ENCODE measurements at regions of chr20 and their contacts with region 1.

Region 1: DNA sequence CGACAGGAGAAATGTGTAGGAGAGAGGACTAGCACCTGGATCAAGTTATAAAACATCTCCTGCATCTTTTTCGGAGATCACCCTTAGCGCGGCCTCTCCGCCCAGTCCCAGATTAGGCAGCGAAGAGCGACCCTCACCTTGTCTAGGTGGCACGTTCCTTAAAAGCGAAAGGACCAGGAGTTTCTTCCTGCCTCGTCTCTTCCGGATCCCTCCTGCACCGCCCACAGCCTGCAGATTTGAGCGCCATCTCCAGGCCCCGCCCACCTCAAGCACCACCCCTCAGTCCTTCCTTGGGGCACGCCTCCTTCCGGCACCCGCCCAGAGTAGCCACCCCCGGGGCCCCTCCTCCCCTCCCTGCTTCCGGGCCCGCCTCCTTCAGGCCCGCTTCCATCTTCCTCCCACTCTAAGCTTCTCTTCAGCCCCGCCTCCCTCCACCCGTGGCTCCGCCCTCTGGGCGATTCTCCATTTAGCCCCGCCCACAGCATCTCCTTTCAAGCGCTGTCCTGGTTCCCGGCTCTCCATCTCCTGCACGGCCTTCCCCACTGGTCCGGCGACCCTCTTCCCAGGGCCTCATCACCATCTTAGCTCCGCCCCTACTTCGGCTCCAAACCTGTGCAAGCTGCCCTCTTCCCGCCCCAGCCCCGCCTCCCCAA is 662 bp upstream of the RALY start:
- DNase-seq: peak; percentile 93
- ATAC-seq: peak; percentile 85
- H3K4me3 ChIP-seq: peak overlapping the region; percentile 87
- H3K27ac ChIP-seq: peak overlapping the region; percentile 96
- H3K4me1 ChIP-seq: peaks cover 12% of the 10 kb centered on the region
- H3K27me3 ChIP-seq: no peaks in the 10 kb centered on the region
- CTCF ChIP-seq: no peak
- EP300 ChIP-seq: no peak
- POLR2A ChIP-seq: peak; percentile 90
- RAD21 ChIP-seq: no peak

Region 2: DNA sequence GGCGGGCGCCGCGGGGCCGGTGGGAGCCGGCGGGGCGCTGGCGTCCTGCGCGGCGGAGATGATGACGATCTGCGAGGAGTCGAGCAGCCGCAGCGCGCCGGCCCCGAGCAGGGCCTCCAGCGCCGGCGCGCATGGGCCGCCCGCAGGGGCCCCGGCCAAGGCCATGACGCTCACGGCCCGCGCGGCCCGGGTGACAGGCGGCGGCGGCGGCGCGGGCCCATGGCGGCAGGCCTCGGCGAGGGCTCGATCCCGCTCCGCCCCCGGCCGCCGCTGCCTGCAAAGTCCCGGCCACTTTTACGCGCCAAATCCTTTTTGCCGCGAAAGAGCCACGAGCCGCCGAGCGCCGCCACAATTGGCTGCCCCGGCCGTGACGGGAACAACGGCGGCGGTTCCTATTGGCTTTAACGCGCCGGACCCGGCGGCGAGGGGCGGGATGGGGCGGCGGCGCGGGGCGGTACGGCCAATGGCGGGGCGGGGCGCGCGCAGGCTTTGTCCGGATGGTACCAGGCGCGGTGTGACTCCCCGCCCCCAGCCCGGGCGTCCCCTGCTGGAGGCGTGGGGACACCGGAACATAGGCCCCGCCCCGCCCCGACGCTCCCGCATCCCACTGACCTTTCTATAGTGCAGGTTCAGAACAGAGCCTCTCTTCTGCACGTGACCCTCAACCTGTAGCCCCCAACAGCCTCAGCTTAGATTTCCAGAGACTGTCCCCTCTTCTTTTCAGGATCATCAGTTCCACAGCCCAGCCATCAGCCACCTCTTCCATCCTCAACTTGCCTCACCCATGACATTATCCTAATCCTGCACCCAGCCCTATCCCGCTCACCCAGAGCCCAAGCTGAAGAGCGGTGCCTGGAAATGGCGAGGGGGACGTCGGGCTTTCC is 306.7 kb before region 1 on chr20 and contains the start of gene E2F1:
- CTCF ChIA-PET with region 1: no interaction called
- POLR2A ChIA-PET with region 1: no interaction called
- RAD21 ChIA-PET with region 1: no interaction called
- SMC1A ChIA-PET with region 1: no interaction called
- in situ Hi-C with region 1: no loop called
- intact Hi-C with region 1: loop called (anchors 10 kb)
- DNase-seq: peak; percentile 61
- ATAC-seq: peak; percentile 95
- H3K4me3 ChIP-seq: peak within 1 kb of the TSS; percentile 79
- H3K27ac ChIP-seq: peak within 1 kb of the TSS; percentile 88
- H3K4me1 ChIP-seq: peaks cover 33% of the 10 kb centered on the region
- H3K27me3 ChIP-seq: no peaks in the 10 kb centered on the region
- CTCF ChIP-seq: peak in 2 of 3 experiments; percentile 21 to 28; a peak in 2 of 6 replicates
- EP300 ChIP-seq: no peak
- POLR2A ChIP-seq: peak; percentile 57; the same call in 1 of the 2 replicates
- RAD21 ChIP-seq: no peak
- polyA plus RNA-seq, gene E2F1: 0.29 to 2.1 TPM

Region 3: GRCh38 chr20:33810885-33811777 is 181.9 kb before region 1 on chr20 and contains the start of gene CHMP4B:
- CTCF ChIA-PET with region 1: no interaction called
- POLR2A ChIA-PET with region 1: interaction called, 14 read pairs
- RAD21 ChIA-PET with region 1: no interaction called
- SMC1A ChIA-PET with region 1: no interaction called
- in situ Hi-C with region 1: no loop called
- intact Hi-C with region 1: no loop called
- DNase-seq: peak; percentile 87
- ATAC-seq: peak; percentile 95
- H3K4me3 ChIP-seq: peak within 1 kb of the TSS; percentile 97
- H3K27ac ChIP-seq: peak within 1 kb of the TSS; percentile 90
- H3K4me1 ChIP-seq: peaks cover 4% of the 10 kb centered on the region; the same call in 1 of the 2 replicates
- H3K27me3 ChIP-seq: no peaks in the 10 kb centered on the region
- CTCF ChIP-seq: no peak
- EP300 ChIP-seq: no peak
- POLR2A ChIP-seq: peak; percentile 73
- RAD21 ChIP-seq: no peak
- polyA plus RNA-seq, gene CHMP4B: 4.2 to 12.9 TPM

Region 4: DNA sequence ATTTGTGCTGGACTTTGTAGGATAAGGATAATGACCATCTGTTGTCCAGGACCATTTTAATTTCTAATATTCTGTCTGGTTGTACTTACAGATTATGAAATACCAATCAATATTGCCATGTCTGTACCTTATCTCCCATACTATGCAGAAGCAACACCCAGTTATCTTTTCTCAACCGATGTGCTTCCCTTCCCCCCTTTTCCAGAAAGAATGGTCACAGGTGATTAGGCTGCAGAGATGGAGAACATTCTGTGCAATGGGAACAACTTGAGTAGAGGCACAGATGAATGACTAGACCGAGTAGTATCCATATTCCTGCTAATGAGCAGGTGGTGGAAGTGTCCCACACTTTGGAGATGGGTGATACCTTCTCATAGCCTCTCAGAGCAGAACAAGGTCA is 11.2 kb after region 1 on chr20:
- CTCF ChIA-PET with region 1: no interaction called
- POLR2A ChIA-PET with region 1: interaction called, 10 read pairs
- RAD21 ChIA-PET with region 1: interaction called, 3 read pairs
- SMC1A ChIA-PET with region 1: interaction called, 4 read pairs
- in situ Hi-C with region 1: no loop called
- intact Hi-C with region 1: no loop called
- DNase-seq: no peak
- ATAC-seq: no peak
- H3K4me3 ChIP-seq: no peak overlapping the region
- H3K27ac ChIP-seq: no peak overlapping the region
- H3K4me1 ChIP-seq: peaks cover under 1% of the 10 kb centered on the region; the same call in 1 of the 2 replicates
- H3K27me3 ChIP-seq: no peaks in the 10 kb centered on the region
- CTCF ChIP-seq: no peak
- EP300 ChIP-seq: no peak
- POLR2A ChIP-seq: no peak
- RAD21 ChIP-seq: no peak

Region 5: GRCh38 chr20:34022154-34022838 is 29.2 kb after region 1 on chr20:
- CTCF ChIA-PET with region 1: interaction called, 13 read pairs
- POLR2A ChIA-PET with region 1: interaction called, 4 read pairs
- RAD21 ChIA-PET with region 1: interaction called, 8 read pairs
- SMC1A ChIA-PET with region 1: no interaction called
- in situ Hi-C with region 1: no loop called
- intact Hi-C with region 1: no loop called
- DNase-seq: peak; percentile 63
- ATAC-seq: peak; percentile 88
- H3K4me3 ChIP-seq: no peak overlapping the region
- H3K27ac ChIP-seq: peak overlapping the region; percentile 63
- H3K4me1 ChIP-seq: peaks cover 20% of the 10 kb centered on the region
- H3K27me3 ChIP-seq: no peaks in the 10 kb centered on the region
- CTCF ChIP-seq: peak; percentile 44 to 54 (median 48)
- EP300 ChIP-seq: 0 out of 4 replicates have a peak, but pooled peaks of 1 of the 2 experiments have one; percentile 10
- POLR2A ChIP-seq: no peak
- RAD21 ChIP-seq: peak; percentile 70

Measured in GM12878 (cell line).